ENCODE measurements at regions of chr3 and their contacts with region 1.

Region 1: DNA sequence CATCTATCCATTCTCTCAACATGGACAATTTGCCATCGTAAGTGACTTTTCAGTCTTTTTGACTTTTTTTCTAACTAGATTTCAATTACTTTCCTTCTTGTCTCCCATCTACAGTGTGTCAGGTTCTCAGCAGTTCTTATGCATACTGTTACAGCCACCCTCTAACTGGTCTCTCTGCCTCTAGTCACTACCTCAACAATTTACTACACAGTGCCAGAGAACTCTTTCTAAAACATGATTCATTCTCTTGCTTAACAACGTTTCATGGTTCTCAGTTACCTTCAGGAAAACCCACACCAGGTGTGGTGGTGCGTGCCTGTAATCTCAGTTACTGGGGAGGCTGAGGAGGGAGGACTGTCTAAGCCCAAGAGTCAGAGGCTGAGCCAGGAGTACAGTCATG is 95.4 kb downstream of the DIPK2A start:
- DNase-seq: no peak
- ATAC-seq: no peak
- H3K4me3 ChIP-seq: no peak overlapping the region
- H3K27ac ChIP-seq: no peak overlapping the region
- H3K4me1 ChIP-seq: no peaks in the 10 kb centered on the region
- H3K27me3 ChIP-seq: no peaks in the 10 kb centered on the region
- CTCF ChIP-seq: no peak
- POLR2A ChIP-seq: no peak

Region 2: DNA sequence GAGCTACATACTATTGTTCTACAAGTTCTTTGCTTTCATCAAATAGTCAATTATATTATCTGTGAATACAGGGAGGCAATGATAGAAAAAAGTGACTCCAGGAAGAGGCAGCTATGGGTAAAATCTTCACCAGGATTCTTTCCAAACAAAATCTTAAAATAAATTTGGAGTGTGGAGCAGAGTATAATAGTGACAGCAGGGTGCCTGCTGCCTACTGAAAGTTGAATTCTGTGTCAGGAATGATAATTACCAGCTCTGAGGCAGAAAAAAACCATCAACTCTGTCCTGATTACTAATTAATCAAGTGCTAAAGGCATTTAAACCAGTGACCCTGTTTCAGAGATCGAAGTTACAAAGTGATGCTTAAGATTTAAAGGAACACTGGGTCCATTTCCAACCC is 52.6 kb after region 1 on chr3:
- intact Hi-C with region 1: loop called in 1 of 10 experiments (anchors 2 kb)
- DNase-seq: no peak
- ATAC-seq: no peak
- H3K4me3 ChIP-seq: no peak overlapping the region
- H3K27ac ChIP-seq: no peak overlapping the region
- H3K4me1 ChIP-seq: no peaks in the 10 kb centered on the region
- H3K27me3 ChIP-seq: no peaks in the 10 kb centered on the region
- CTCF ChIP-seq: no peak
- POLR2A ChIP-seq: no peak

Region 3: GRCh38 chr3:144162079-144162478 is 95.0 kb after region 1 on chr3:
- intact Hi-C with region 1: no loop called
- DNase-seq: no peak
- ATAC-seq: no peak
- H3K4me3 ChIP-seq: no peak overlapping the region
- H3K27ac ChIP-seq: no peak overlapping the region
- H3K4me1 ChIP-seq: no peaks in the 10 kb centered on the region
- H3K27me3 ChIP-seq: no peaks in the 10 kb centered on the region
- CTCF ChIP-seq: no peak
- POLR2A ChIP-seq: no peak